ENCODE measurements at regions of chr22 and their contacts with region 1.

Region 1: DNA sequence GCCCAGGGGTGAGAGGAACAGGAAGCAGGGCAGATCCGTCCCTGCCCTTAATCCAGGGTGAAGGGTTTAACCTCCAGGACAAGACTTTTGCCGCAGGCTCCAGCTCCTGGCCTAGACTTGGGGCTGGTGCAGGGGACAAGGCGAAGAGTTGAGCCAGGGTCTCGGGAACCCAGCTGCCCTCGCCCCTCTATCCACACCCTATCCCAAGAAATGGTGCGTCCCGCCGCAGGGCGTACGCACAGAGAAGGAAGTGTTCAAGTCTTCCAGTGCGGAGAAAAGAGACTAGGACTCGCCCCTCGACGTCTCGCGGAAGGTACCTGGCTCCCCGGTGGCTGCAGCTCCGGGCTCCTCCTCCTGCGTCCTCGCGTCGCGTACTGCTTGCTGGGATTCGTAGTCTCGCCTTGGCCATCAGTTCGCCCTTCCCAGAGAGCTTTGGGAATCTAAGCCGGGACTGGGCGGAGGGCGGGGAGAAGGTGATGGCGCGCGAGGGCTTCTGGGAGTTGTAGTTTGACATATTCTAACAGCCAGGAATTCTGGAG is at the start of gene ZMAT5:
- DNase-seq: peak; percentile 96
- H3K4me3 Mint-ChIP-seq: peak within 1 kb of the TSS; percentile 100
- H3K27ac Mint-ChIP-seq: peak within 1 kb of the TSS; percentile 94
- H3K4me1 Mint-ChIP-seq: peaks cover 26% of the 10 kb centered on the region
- H3K27me3 Mint-ChIP-seq: no peaks in the 10 kb centered on the region
- total RNA-seq, gene ZMAT5: 18.1 to 20.6 TPM

Region 2: GRCh38 chr22:29580200-29580810 is 186.4 kb before region 1 on chr22:
- CTCF ChIA-PET with region 1: no interaction called
- POLR2A ChIA-PET with region 1: no interaction called
- intact Hi-C with region 1: loop called (anchors 1 kb)
- DNase-seq: peak; percentile 20
- H3K4me3 Mint-ChIP-seq: peak overlapping the region; percentile 85
- H3K27ac Mint-ChIP-seq: peak overlapping the region; percentile 82
- H3K4me1 Mint-ChIP-seq: peaks cover 13% of the 10 kb centered on the region
- H3K27me3 Mint-ChIP-seq: no peaks in the 10 kb centered on the region

Region 3: DNA sequence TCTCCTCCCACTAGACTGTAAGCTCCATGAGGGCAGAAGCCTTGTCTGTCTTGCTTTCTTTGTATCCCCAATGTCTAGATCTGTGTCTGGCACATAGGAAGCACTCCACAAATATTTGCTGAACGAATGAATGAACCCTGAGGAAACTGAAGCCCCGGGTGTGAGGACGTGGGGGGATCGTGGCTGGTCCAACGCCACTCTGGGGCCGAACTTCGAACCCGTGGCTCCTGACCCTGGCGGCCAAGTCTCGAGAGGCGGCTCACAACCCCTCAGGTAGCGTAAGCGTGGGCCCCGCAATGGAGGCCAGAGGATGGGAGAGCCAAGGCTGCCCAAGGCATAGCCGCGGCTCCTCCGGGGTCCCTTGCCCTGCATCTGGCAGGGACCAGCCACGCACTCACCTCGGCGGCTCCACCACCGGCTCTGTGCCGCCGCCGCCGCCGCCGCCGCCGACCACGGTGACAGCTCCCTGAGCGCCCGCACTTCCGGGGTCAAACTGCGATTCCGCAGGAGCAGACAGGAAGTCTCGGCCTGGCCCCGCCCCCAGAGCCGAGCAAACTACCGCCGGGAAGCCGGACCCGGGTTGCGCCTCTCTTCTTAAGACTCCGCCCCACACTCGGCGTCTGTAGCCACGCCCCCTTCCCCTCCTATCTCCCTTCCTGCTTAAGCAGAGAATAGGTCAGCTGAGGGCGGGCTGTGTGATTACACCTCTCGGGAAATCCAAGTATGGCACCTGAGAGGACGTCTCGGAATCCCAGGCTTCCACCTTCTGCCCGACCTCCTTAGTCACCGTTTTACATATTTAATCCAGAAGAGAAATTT is 71.3 kb after region 1 on chr22 and contains the start of gene ASCC2:
- CTCF ChIA-PET with region 1: no interaction called
- POLR2A ChIA-PET with region 1: no interaction called
- intact Hi-C with region 1: loop called (anchors 1 kb)
- DNase-seq: peak; percentile 100
- H3K4me3 Mint-ChIP-seq: peak within 1 kb of the TSS; percentile 91
- H3K27ac Mint-ChIP-seq: peak within 1 kb of the TSS; percentile 95
- H3K4me1 Mint-ChIP-seq: peaks cover 38% of the 10 kb centered on the region
- H3K27me3 Mint-ChIP-seq: no peaks in the 10 kb centered on the region
- total RNA-seq, gene ASCC2: 55.5 to 56.8 TPM

Region 4: GRCh38 chr22:29883045-29883774 is 116.5 kb after region 1 on chr22 and contains the start of gene MTMR3:
- CTCF ChIA-PET with region 1: no interaction called
- POLR2A ChIA-PET with region 1: no interaction called
- intact Hi-C with region 1: loop called (anchors 2 kb)
- DNase-seq: peak; percentile 96
- H3K4me3 Mint-ChIP-seq: peak within 1 kb of the TSS; percentile 86
- H3K27ac Mint-ChIP-seq: peak within 1 kb of the TSS; percentile 73
- H3K4me1 Mint-ChIP-seq: peaks cover 12% of the 10 kb centered on the region
- H3K27me3 Mint-ChIP-seq: no peaks in the 10 kb centered on the region
- total RNA-seq, gene MTMR3: 22.7 to 25.3 TPM

Region 5: GRCh38 chr22:30079952-30080533 is 313.3 kb after region 1 on chr22 and contains the start of gene HORMAD2:
- CTCF ChIA-PET with region 1: no interaction called
- POLR2A ChIA-PET with region 1: no interaction called
- intact Hi-C with region 1: loop called (anchors 5 kb)
- DNase-seq: no peak
- H3K4me3 Mint-ChIP-seq: no peak within 1 kb of the TSS
- H3K27ac Mint-ChIP-seq: no peak within 1 kb of the TSS
- H3K4me1 Mint-ChIP-seq: peaks cover 20% of the 10 kb centered on the region
- H3K27me3 Mint-ChIP-seq: no peaks in the 10 kb centered on the region
- total RNA-seq, gene HORMAD2: not detected

Region 6: DNA sequence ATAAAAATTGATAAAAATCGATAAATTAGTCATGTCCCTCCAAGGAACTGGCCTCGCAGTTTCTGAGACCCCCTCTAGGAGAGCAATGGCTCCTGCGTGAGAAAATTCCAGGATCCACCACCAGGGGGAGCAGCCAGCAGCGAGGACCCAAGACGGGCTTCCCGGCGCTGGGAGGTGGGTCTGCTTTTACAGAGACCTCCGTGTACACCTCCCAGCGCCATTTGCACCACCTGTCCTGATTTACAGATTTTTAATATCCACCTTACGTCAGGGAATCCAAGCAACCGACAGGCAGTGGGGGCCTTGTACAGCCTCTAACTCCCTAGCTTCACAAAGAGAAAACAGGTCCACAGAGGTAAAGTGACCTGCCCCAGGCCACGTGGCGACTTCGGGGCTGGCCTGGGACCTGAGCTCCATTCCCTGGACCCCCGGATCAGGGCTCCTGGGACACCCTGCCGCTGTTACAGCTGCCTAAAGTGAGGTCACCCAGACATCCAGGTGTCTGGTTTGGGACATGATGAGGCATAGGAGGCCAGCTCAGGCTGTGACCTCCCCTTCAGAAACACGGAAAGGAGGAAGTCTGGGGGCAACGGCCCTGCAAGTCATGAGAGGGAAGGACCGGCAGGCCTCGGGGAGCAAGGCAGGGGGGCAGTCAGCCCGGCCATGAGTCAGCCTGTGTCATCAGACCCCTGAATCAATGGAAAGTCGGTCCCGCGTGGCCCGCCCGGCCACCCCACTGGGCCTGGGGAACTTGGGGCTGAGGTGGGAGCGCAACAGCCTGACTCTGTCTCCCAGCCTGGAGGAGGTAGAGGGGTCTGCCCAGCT is 496.4 kb after region 1 on chr22:
- CTCF ChIA-PET with region 1: no interaction called
- POLR2A ChIA-PET with region 1: no interaction called
- intact Hi-C with region 1: loop called (anchors 10 kb)
- DNase-seq: peak; percentile 86
- H3K4me3 Mint-ChIP-seq: peak overlapping the region; percentile 71
- H3K27ac Mint-ChIP-seq: peak overlapping the region; percentile 69
- H3K4me1 Mint-ChIP-seq: peaks cover 34% of the 10 kb centered on the region
- H3K27me3 Mint-ChIP-seq: no peaks in the 10 kb centered on the region

Measured in activated CD4-positive, alpha-beta memory T cell treated with anti-CD3 and anti-CD28 coated beads for 36 hours (primary cell).